Calu3 (cell line): ENCODE measurements at regions of chr3 and their contacts with region 1.

Region 1: DNA sequence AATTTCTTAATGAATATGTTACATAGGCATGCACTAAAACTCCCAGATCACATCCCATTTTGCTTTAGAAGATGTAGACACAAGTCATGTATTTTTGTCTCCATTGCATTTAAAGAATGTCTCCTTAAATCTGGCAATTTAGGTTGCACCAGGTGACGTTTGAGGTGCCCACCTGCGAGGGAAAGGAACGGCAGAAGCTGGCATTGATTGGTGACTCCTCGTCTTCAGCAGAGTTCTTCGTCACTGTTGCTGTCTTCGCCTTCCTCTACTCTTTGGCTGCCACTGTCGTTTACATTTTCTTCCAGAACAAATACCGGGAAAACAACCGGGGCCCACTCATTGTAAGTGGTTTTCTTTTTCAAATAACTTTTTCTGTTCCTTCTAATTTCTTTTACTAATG is 96.1 kb upstream of the SNTN start:
- DNase-seq: no peak
- H3K4me3 Mint-ChIP-seq: no peak overlapping the region
- H3K27ac Mint-ChIP-seq: no peak overlapping the region
- H3K4me1 Mint-ChIP-seq: peaks cover 12% of the 10 kb centered on the region
- H3K27me3 Mint-ChIP-seq: no peaks in the 10 kb centered on the region
- CTCF ChIP-seq: no peak

Region 2: GRCh38 chr3:63519426-63519825 is 37.0 kb before region 1 on chr3:
- CTCF ChIA-PET with region 1: no interaction called
- intact Hi-C with region 1: no loop called
- DNase-seq: no peak
- H3K4me3 Mint-ChIP-seq: no peak overlapping the region
- H3K27ac Mint-ChIP-seq: no peak overlapping the region
- H3K4me1 Mint-ChIP-seq: no peaks in the 10 kb centered on the region
- H3K27me3 Mint-ChIP-seq: no peaks in the 10 kb centered on the region
- CTCF ChIP-seq: no peak

Region 3: DNA sequence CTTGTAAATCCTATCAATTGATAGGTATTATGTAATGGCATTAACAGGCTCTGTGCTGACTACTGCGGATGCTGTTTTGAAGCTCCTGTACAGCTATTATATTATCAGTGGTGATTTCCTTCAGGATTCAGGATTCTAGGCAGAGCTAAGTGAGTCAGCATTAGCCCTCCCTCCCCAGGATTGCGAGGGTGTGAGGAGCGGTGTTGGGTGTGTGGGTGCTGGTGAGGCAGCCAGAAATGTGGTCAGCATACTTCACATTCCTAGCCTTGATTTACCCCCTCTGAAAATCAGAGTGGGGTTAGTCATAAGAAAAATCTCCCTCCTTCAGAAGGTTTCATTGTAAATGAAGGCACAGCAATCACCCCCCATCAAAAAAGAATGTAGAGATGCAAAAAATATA is 168.6 kb after region 1 on chr3:
- CTCF ChIA-PET with region 1: interaction called, 10 read pairs
- intact Hi-C with region 1: no loop called
- DNase-seq: peak; percentile 77
- H3K4me3 Mint-ChIP-seq: peak overlapping the region; percentile 50
- H3K27ac Mint-ChIP-seq: peak overlapping the region; percentile 80
- H3K4me1 Mint-ChIP-seq: peaks cover 24% of the 10 kb centered on the region
- H3K27me3 Mint-ChIP-seq: no peaks in the 10 kb centered on the region
- CTCF ChIP-seq: no peak